Gastrocnemius medialis (tissue), 4 donors: ENCODE measurements at regions of chr9 and their contacts with region 1.

Region 1: GRCh38 chr9:69809304-69809863 is 11.2 kb upstream of the CFAP95 start:
- DNase-seq: no peak
- ATAC-seq: no peak
- H3K4me3 ChIP-seq: no peak overlapping the region
- H3K27ac ChIP-seq: no peak overlapping the region
- H3K4me1 ChIP-seq: no peaks in the 10 kb centered on the region
- H3K27me3 ChIP-seq: no peaks in the 10 kb centered on the region
- CTCF ChIP-seq: peak in 1 of 5 experiments; percentile 8
- POLR2A ChIP-seq: no peak

Region 2: DNA sequence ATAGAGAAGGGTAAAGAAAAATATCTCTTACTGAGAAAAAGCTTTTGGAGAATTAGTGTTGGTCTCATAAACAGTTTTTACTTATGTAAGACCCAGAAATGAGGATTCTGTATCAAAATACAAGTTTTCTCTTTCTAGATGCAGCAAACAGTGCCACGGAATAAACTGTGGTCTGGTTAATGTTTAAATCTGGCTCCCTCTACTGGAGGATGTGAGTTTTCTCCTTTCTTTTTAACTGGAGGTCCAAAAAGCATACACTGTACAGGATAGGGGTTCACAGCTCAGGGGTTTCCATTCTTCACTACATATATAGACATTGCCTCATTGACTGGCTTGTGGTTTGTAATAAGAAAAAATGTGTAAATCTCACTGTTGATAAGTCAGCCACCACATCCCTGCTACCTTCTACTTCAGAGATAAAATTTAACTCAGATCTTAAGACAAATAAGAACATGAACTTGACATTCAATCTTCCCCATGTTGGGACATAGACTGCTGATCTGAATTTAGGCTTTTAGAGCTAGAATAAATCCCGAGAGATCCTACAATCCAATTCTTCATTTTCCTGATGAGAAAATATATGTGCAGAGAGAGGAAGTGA is 110.2 kb after region 1 on chr9:
- in situ Hi-C with region 1: loop called in 1 of 4 experiments (anchors 25 kb)
- intact Hi-C with region 1: no loop called
- DNase-seq: no peak
- ATAC-seq: peak in 1 of 2 donors; percentile 75
- H3K4me3 ChIP-seq: no peak overlapping the region
- H3K27ac ChIP-seq: no peak overlapping the region
- H3K4me1 ChIP-seq: no peaks in the 10 kb centered on the region
- H3K27me3 ChIP-seq: no peaks in the 10 kb centered on the region
- CTCF ChIP-seq: peak; percentile 26 to 68 (median 42)
- POLR2A ChIP-seq: no peak

Region 3: GRCh38 chr9:70229579-70229978 is 420.2 kb after region 1 on chr9:
- in situ Hi-C with region 1: no loop called
- intact Hi-C with region 1: no loop called
- DNase-seq: no peak
- ATAC-seq: no peak
- H3K4me3 ChIP-seq: no peak overlapping the region
- H3K27ac ChIP-seq: peak overlapping the region in 1 of 4 donors; percentile 39
- H3K4me1 ChIP-seq: peaks cover 16 to 17% of the 10 kb centered on the region in 2 donors
- H3K27me3 ChIP-seq: no peaks in the 10 kb centered on the region
- CTCF ChIP-seq: peak in 3 of 5 experiments; percentile 25 to 28 (median 28)
- POLR2A ChIP-seq: no peak